Activated B cell treated with CpG ODN at 0.5 μM for 24 hours (primary cell): ENCODE measurements at regions of chr6 and their contacts with region 1.

Region 1: GRCh38 chr6:111804627-111805235 is 68.5 kb downstream of the FYN start:
- DNase-seq: no peak
- ATAC-seq: peak; percentile 69
- H3K4me3 Mint-ChIP-seq: peak overlapping the region; percentile 55
- H3K27ac Mint-ChIP-seq: peak overlapping the region; percentile 90
- H3K4me1 Mint-ChIP-seq: peaks cover 53% of the 10 kb centered on the region
- H3K27me3 Mint-ChIP-seq: no peaks in the 10 kb centered on the region
- CTCF ChIP-seq: no peak

Region 2: GRCh38 chr6:111709615-111710398 is 94.9 kb before region 1 on chr6:
- CTCF ChIA-PET with region 1: interaction called, 4 read pairs
- POLR2A ChIA-PET with region 1: interaction called, 3 read pairs
- intact Hi-C with region 1: loop called (anchors 1 kb)
- DNase-seq: no peak
- ATAC-seq: peak; percentile 97
- H3K4me3 Mint-ChIP-seq: peak overlapping the region; percentile 19
- H3K27ac Mint-ChIP-seq: no peak overlapping the region
- H3K4me1 Mint-ChIP-seq: peaks cover 4% of the 10 kb centered on the region
- H3K27me3 Mint-ChIP-seq: no peaks in the 10 kb centered on the region
- CTCF ChIP-seq: peak; percentile 44

Region 3: DNA sequence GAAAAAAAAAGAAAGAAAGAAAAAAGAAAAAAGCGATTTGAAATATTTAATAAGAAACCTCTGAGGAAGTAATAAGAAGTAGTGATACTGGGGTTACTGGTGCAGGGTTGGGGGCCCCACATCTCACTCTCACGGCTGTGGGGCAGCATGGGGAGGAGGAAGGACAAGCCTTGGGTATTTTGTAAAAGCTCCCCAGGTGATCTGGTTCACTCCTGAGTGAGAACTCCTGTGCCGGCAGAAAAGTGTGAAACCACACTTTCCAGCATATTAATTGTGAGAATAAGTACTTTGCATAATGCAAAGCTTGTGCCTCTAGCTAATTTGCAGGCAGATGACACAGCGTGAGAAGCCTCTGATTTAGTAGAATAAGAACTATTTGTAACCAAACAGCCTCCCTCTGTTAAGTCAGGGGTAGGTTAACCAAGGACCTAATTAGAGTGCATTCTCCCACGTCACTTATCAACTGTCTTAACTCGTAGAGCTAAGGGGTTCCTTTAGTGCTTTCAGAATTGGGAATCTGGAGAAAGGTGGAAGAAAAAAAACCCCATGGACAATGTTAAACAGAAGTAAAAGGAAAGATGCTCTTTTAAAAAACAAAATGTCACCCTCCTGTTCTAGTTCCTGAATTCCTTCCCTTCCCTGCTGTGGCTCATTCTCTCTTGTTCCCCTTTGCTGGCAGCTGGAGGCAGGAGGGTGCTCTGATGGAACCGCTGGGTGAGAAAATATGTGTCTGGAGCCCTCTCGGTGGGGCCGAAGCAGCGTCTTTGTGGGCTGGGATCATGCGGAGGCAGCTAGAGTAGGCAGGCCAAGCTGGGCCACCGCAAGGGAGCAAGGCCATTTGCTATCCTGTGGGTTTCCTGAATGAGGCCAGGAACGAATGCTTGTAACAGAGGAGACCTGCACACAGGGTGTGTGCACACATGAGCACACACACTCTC is 40.2 kb before region 1 on chr6:
- CTCF ChIA-PET with region 1: no interaction called
- POLR2A ChIA-PET with region 1: interaction called, 5 read pairs
- intact Hi-C with region 1: loop called (anchors 1 kb)
- DNase-seq: no peak
- ATAC-seq: peak; percentile 82
- H3K4me3 Mint-ChIP-seq: peak overlapping the region; percentile 61
- H3K27ac Mint-ChIP-seq: peak overlapping the region; percentile 81
- H3K4me1 Mint-ChIP-seq: peaks cover 94% of the 10 kb centered on the region
- H3K27me3 Mint-ChIP-seq: no peaks in the 10 kb centered on the region
- CTCF ChIP-seq: no peak

Region 4: DNA sequence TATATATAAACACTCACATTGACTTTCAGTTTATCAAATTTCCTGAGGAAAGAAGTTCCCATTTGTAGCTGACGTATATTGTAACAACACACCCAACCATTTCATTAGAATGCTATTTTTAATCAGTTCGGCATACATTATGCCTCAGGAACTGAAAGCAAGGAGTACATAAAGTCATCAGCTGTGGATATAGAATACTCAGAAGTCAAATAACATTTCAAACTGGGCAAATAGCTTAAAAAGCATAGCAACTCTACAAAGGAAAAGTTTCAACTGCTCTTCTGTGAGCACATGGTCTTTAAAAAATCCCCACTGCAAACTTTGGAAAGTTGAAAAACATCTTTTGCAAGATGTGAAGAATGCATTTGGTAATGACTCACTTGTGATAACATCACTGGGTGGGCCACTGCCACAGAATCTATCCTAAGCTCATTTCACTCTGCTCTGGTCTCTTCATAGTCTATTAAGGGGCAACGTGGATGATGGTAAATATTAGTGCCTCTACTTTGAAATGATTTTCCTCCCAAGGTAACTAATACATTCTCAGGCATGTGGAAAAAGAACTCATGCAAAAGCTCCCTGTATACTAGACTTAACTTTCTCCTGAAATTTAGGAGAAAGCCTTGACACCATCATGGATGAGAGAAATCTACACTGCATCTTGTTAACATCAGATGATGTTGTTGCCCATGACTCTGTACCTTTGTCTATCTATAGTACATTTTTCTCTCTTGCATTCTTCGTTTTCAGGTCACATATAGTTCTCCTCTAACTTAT is 19.3 kb after region 1 on chr6:
- CTCF ChIA-PET with region 1: interaction called, 3 read pairs
- POLR2A ChIA-PET with region 1: interaction called, 6 read pairs
- intact Hi-C with region 1: loop called (anchors 2 kb)
- DNase-seq: no peak
- ATAC-seq: peak; percentile 57
- H3K4me3 Mint-ChIP-seq: no peak overlapping the region
- H3K27ac Mint-ChIP-seq: peak overlapping the region; percentile 77
- H3K4me1 Mint-ChIP-seq: peaks cover 28% of the 10 kb centered on the region
- H3K27me3 Mint-ChIP-seq: no peaks in the 10 kb centered on the region
- CTCF ChIP-seq: no peak

Region 5: DNA sequence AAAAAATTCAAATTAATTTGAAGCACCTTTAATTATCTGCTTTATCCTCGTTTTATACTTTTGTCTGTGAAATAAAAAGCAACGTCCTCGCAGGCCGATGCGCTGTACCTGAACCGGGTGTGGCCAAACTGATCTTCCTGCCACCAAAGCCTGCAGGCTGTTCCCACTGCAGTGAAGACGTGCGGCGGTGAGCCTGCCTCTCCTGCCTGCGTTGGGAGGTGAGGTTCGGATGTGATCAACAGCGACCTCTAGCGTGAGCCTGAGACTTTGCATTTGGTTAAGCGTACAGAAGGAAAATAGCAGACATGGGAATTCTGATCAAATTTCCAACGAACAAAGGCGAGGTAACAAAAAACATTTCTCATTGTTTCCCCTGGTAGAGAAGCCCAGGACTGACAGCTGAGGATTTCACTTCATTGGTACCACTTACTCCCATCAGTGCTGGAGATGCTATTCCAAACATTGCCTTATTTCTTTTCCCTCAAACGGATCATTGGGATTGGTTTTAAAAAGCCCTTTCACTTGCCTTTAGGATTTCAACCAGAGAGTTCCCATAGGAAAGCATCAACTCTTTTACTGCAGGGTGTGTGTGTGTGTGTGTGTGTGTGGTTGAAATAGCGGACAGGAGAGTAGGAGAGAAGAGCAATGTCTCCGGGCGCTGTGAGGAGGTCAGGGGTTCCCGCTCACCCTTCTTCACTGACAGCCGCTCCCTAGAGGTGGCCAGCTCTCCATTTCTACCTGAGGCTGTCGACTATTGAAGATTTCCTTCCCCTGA is 192.5 kb after region 1 on chr6:
- CTCF ChIA-PET with region 1: interaction called, 18 read pairs
- POLR2A ChIA-PET with region 1: no interaction called
- intact Hi-C with region 1: loop called (anchors 1 kb)
- DNase-seq: peak; percentile 49
- ATAC-seq: peak; percentile 90
- H3K4me3 Mint-ChIP-seq: peak overlapping the region; percentile 42
- H3K27ac Mint-ChIP-seq: no peak overlapping the region
- H3K4me1 Mint-ChIP-seq: peaks cover 6% of the 10 kb centered on the region
- H3K27me3 Mint-ChIP-seq: peaks cover 2% of the 10 kb centered on the region
- CTCF ChIP-seq: no peak

Region 6: GRCh38 chr6:112087136-112087911 is 282.6 kb after region 1 on chr6 and contains the starts of genes FAM229B and TUBE1:
- CTCF ChIA-PET with region 1: no interaction called
- POLR2A ChIA-PET with region 1: no interaction called
- intact Hi-C with region 1: loop called (anchors 1 kb)
- DNase-seq: peak; percentile 74
- ATAC-seq: peak; percentile 96
- H3K4me3 Mint-ChIP-seq: no peak within 1 kb of the TSS
- H3K27ac Mint-ChIP-seq: no peak within 1 kb of the TSS
- H3K4me1 Mint-ChIP-seq: no peaks in the 10 kb centered on the region
- H3K27me3 Mint-ChIP-seq: peaks cover 14% of the 10 kb centered on the region
- CTCF ChIP-seq: no peak
- total RNA-seq, gene FAM229B: 2.0 and 2.6 TPM in 2 replicates
- total RNA-seq, gene TUBE1: 24.1 and 28.0 TPM in 2 replicates

Region 7: GRCh38 chr6:112883095-112883494 is 1078.4 kb after region 1 on chr6:
- CTCF ChIA-PET with region 1: no interaction called
- POLR2A ChIA-PET with region 1: no interaction called
- intact Hi-C with region 1: no loop called
- DNase-seq: no peak
- ATAC-seq: no peak
- H3K4me3 Mint-ChIP-seq: no peak overlapping the region
- H3K27ac Mint-ChIP-seq: no peak overlapping the region
- H3K4me1 Mint-ChIP-seq: no peaks in the 10 kb centered on the region
- H3K27me3 Mint-ChIP-seq: peaks cover 2% of the 10 kb centered on the region
- CTCF ChIP-seq: no peak